ENCODE measurements at regions of chr3 and their contacts with region 1.

Region 1: GRCh38 chr3:40584625-40585189 is 59.9 kb downstream of the ZNF621 start:
- DNase-seq: peak; percentile 41 to 73 (median 51)
- H3K4me3 ChIP-seq: no peak overlapping the region
- H3K4me3 Mint-ChIP-seq: no peak overlapping the region
- H3K27ac ChIP-seq: no peak overlapping the region
- H3K27ac Mint-ChIP-seq: no peak overlapping the region
- H3K4me1 ChIP-seq: no peaks in the 10 kb centered on the region
- H3K4me1 Mint-ChIP-seq: no peaks in the 10 kb centered on the region
- H3K27me3 ChIP-seq: peaks cover 6% of the 10 kb centered on the region
- H3K27me3 Mint-ChIP-seq: peaks cover 7 to 15% of the 10 kb centered on the region in 2 donors

Region 2: GRCh38 chr3:40597441-40597840 is 12.7 kb after region 1 on chr3:
- CTCF ChIA-PET with region 1: interaction called, 18 read pairs
- POLR2A ChIA-PET with region 1: no interaction called
- DNase-seq: no peak
- H3K4me3 ChIP-seq: no peak overlapping the region
- H3K4me3 Mint-ChIP-seq: no peak overlapping the region
- H3K27ac ChIP-seq: no peak overlapping the region
- H3K27ac Mint-ChIP-seq: no peak overlapping the region
- H3K4me1 ChIP-seq: no peaks in the 10 kb centered on the region
- H3K4me1 Mint-ChIP-seq: no peaks in the 10 kb centered on the region
- H3K27me3 ChIP-seq: no peaks in the 10 kb centered on the region
- H3K27me3 Mint-ChIP-seq: peaks cover 8 to 62% of the 10 kb centered on the region in 2 donors

Region 3: GRCh38 chr3:41881233-41881821 is 1296.6 kb after region 1 on chr3:
- CTCF ChIA-PET with region 1: interaction called, 43 read pairs
- POLR2A ChIA-PET with region 1: no interaction called
- DNase-seq: peak in 2 of 5 donors; percentile 28 to 29
- H3K4me3 ChIP-seq: no peak overlapping the region
- H3K4me3 Mint-ChIP-seq: no peak overlapping the region
- H3K27ac ChIP-seq: no peak overlapping the region
- H3K27ac Mint-ChIP-seq: no peak overlapping the region
- H3K4me1 ChIP-seq: no peaks in the 10 kb centered on the region
- H3K4me1 Mint-ChIP-seq: no peaks in the 10 kb centered on the region
- H3K27me3 ChIP-seq: no peaks in the 10 kb centered on the region
- H3K27me3 Mint-ChIP-seq: no peaks in the 10 kb centered on the region

Measured in CD8-positive, alpha-beta memory T cell (primary cell).